CD4-positive, alpha-beta memory T cell (primary cell): ENCODE measurements at regions of chr2 and their contacts with region 1.

Region 1: DNA sequence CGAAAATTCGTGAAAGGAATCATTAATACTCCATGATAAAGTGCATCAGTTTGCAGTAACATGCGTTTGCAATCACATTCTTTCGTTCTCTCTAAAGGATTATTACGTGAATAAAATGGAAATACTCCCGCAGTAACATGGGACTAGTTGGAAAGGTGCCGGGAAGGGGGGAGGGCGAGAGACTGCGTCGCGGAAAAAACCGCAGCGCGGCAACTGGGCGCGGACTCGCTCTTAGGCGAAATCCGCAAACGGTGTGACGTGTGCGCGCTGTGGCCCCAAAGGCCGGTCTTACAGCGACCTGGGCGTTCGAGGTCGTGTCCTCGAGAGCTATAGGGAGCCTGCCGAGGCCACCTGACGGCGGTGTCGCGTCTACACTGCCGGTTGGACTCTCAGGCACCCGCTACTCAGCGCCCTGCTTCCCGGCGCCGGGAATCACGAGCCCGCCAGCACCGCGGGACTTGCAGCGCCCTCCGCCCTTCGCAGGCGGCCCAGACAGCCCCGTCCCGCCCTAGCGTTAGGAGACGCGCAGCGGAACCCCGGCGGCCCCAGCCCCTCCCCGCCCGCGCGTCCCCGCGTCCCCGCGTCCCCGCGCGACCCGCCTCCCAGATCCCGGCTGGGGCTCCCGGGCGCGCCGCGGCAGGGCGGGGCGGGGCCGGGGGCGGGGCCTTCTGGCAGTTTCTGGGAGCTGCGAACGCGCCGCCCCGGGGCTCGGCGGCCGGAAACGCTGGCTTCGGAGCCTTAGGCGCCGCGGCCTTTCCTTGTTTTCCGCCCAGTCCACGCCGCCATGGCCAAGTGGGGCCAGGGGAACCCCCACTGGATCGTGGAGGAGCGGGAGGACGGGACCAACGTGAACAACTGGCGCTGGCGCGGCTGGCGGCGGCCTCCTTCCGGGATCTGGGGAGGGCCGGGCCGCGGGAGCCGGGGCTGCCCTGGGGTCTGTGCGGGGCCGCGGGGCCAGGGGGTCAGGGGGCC is 15.1 kb downstream of the C2orf74 start:
- DNase-seq: peak; percentile 89 to 94 (median 93)
- H3K4me3 ChIP-seq: peak overlapping the region; percentile 74 to 100
- H3K4me3 Mint-ChIP-seq: peak overlapping the region; percentile 91 to 95 (median 93)
- H3K27ac ChIP-seq: peak overlapping the region; percentile 93
- H3K27ac Mint-ChIP-seq: peak overlapping the region; percentile 88 to 96 (median 94)
- H3K4me1 ChIP-seq: peaks cover 47% of the 10 kb centered on the region
- H3K4me1 Mint-ChIP-seq: peaks cover 39 to 56% (median 45%) of the 10 kb centered on the region in 4 donors
- H3K27me3 ChIP-seq: no peaks in the 10 kb centered on the region
- H3K27me3 Mint-ChIP-seq: no peaks in the 10 kb centered on the region

Region 2: GRCh38 chr2:60881047-60881932 is 295.8 kb before region 1 on chr2 and contains the start of gene REL:
- CTCF ChIA-PET with region 1: interaction called, 3 read pairs
- POLR2A ChIA-PET with region 1: interaction called, 28 read pairs
- intact Hi-C with region 1: loop called (anchors 10 kb)
- DNase-seq: peak; percentile 88 to 91 (median 89)
- H3K4me3 ChIP-seq: peak within 1 kb of the TSS; percentile 96 to 100
- H3K4me3 Mint-ChIP-seq: peak within 1 kb of the TSS; percentile 92 to 100 (median 96)
- H3K27ac ChIP-seq: peak within 1 kb of the TSS; percentile 100
- H3K27ac Mint-ChIP-seq: peak within 1 kb of the TSS; percentile 91 to 100 (median 99)
- H3K4me1 ChIP-seq: peaks cover 33% of the 10 kb centered on the region
- H3K4me1 Mint-ChIP-seq: peaks cover 14 to 41% (median 31%) of the 10 kb centered on the region in 4 donors
- H3K27me3 ChIP-seq: no peaks in the 10 kb centered on the region
- H3K27me3 Mint-ChIP-seq: no peaks in the 10 kb centered on the region
- total RNA-seq, gene REL: 26.5 to 28.0 TPM

Region 3: DNA sequence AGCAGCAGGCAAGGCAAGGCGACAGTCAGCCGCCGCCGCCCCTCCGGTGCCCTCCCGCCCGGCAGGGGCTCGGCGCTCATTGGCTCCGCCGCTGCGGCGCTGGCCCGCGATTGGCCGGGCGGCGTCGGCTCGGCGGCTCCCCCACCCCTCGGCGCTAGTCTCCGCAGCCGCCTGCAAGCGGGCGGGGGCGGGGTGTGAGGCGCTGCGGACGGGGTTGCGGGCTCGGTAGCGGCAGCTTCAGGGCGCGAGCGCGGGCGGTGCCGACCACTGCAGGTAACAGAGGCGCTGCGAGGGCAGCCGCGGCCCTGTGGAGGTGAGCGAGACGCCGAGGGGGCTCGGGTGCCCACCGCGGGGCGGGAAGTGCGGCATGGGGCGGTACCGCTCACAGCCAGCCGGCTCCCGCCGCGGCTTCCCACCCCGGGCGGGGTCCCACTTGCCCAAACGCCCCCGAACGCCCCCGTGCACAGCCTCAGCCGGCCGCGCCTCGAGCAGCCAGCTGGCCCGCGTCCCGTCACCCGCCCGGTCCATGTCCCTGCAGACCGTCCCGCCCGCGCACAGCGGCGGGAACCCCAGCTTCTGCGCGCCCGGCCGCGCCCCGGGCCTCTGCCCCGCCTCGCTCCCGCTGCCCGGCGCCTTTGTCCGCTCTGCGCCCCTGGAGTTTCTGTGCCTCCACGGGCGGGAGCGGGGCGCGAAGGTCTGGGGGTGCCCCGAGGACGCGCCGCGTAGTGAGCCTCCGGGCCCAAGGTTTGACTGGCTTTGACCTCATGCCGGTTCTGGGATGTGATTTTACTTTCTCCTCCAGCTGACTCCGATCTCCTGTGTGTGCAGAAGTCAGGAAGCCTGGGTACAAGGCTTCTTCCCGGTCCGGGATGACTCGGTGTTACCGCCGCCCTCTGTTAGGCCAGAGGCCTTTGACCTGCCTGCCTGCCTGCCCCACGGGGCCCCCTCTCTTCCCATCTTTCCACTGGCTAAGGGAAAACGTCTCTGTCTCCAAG is 111.0 kb before region 1 on chr2 and contains the start of gene SANBR:
- CTCF ChIA-PET with region 1: interaction called, 4 read pairs
- POLR2A ChIA-PET with region 1: interaction called, 33 read pairs
- intact Hi-C with region 1: loop called (anchors 1 kb)
- DNase-seq: peak; percentile 83 to 88 (median 86)
- H3K4me3 ChIP-seq: peak within 1 kb of the TSS; percentile 50 to 59
- H3K4me3 Mint-ChIP-seq: peak within 1 kb of the TSS; percentile 93 to 98 (median 97)
- H3K27ac ChIP-seq: peak within 1 kb of the TSS; percentile 51
- H3K27ac Mint-ChIP-seq: peak within 1 kb of the TSS; percentile 89 to 95 (median 93)
- H3K4me1 ChIP-seq: peaks cover 8% of the 10 kb centered on the region
- H3K4me1 Mint-ChIP-seq: peaks cover 7 to 16% (median 8%) of the 10 kb centered on the region in 4 donors
- H3K27me3 ChIP-seq: no peaks in the 10 kb centered on the region
- H3K27me3 Mint-ChIP-seq: no peaks in the 10 kb centered on the region
- total RNA-seq, gene SANBR: 5.4 to 6.0 TPM

Region 4: GRCh38 chr2:61162721-61163120 is 14.3 kb before region 1 on chr2:
- CTCF ChIA-PET with region 1: interaction called, 3 read pairs
- POLR2A ChIA-PET with region 1: interaction called, 17 read pairs
- intact Hi-C with region 1: no loop called
- DNase-seq: no peak
- H3K4me3 ChIP-seq: no peak overlapping the region
- H3K4me3 Mint-ChIP-seq: no peak overlapping the region
- H3K27ac ChIP-seq: no peak overlapping the region
- H3K27ac Mint-ChIP-seq: peak overlapping the region in 3 of 7 donors; percentile 3 to 67 (median 29)
- H3K4me1 ChIP-seq: no peaks in the 10 kb centered on the region
- H3K4me1 Mint-ChIP-seq: peaks cover 0 to 6% (median 3%) of the 10 kb centered on the region in 4 donors
- H3K27me3 ChIP-seq: no peaks in the 10 kb centered on the region
- H3K27me3 Mint-ChIP-seq: no peaks in the 10 kb centered on the region

Region 5: DNA sequence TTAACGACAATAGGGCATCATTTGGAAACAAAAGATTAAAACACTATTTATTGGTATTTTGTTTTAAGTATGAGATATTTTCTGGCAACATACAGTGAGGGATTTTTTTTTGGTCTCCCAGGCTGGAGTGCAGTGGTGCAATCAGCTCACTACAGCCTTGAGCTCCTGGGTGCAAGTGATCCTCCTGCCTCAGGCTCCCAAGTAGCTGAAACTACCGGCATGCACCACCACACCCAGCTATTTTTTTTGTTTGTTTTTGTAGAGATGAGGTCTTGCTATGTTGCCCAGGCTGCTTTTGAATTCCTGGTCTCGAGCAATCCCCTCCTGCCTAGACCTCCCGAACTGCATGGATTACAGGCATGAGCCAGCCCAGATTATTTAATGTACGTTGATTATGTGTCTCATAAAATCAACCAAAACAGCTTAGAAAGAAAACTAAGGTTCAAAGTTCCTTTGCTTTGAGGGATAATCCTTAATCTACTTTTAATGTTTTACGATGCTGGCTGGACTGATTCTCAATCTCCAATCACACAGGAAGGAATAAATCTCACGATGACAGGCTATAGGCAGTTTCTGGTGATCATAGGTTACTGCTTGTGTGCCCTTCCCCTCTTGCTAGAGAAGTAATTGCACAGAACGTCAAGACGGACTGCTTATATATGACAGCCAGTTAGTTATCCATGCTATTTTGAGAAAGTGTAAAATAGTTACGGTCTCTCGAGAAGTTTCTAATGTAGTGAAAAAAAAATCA is 27.9 kb after region 1 on chr2:
- CTCF ChIA-PET with region 1: no interaction called
- POLR2A ChIA-PET with region 1: interaction called, 16 read pairs
- intact Hi-C with region 1: no loop called
- DNase-seq: no peak
- H3K4me3 ChIP-seq: no peak overlapping the region
- H3K4me3 Mint-ChIP-seq: no peak overlapping the region
- H3K27ac ChIP-seq: no peak overlapping the region
- H3K27ac Mint-ChIP-seq: no peak overlapping the region
- H3K4me1 ChIP-seq: no peaks in the 10 kb centered on the region
- H3K4me1 Mint-ChIP-seq: no peaks in the 10 kb centered on the region
- H3K27me3 ChIP-seq: no peaks in the 10 kb centered on the region
- H3K27me3 Mint-ChIP-seq: no peaks in the 10 kb centered on the region

Region 6: DNA sequence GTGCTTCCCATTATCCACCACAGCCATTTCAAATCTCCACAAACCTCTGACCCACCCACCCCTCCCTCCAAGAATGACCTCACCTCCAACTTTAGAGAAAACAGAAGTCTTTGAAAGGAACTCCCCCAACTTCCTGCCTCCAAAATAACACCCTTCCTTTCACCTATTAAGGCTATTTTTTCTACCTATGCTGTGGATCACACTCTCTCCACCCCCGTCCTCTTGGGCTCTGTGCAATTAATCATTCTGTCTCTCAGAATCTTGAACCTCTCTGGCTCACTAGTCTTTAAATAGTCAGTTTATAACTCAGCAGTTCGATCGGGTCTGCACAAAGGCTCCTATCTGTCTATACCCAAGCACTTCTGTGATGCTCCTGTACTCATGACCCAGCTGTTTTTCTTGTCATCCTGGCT is 398.4 kb after region 1 on chr2:
- CTCF ChIA-PET with region 1: no interaction called
- POLR2A ChIA-PET with region 1: no interaction called
- intact Hi-C with region 1: no loop called
- DNase-seq: peak in 1 of 5 donors; percentile 1
- H3K4me3 ChIP-seq: no peak overlapping the region
- H3K4me3 Mint-ChIP-seq: peak overlapping the region in 1 of 8 donors; percentile 45
- H3K27ac ChIP-seq: no peak overlapping the region
- H3K27ac Mint-ChIP-seq: peak overlapping the region in 4 of 7 donors; percentile 22 to 87 (median 74)
- H3K4me1 ChIP-seq: peaks cover 8% of the 10 kb centered on the region
- H3K4me1 Mint-ChIP-seq: peaks cover 6 to 9% (median 7%) of the 10 kb centered on the region in 4 donors
- H3K27me3 ChIP-seq: no peaks in the 10 kb centered on the region
- H3K27me3 Mint-ChIP-seq: no peaks in the 10 kb centered on the region

Region 7: GRCh38 chr2:61764035-61764800 is 587.2 kb after region 1 on chr2:
- CTCF ChIA-PET with region 1: no interaction called
- POLR2A ChIA-PET with region 1: interaction called, 5 read pairs
- intact Hi-C with region 1: loop called (anchors 1 kb)
- DNase-seq: peak; percentile 95 to 98 (median 96)
- H3K4me3 ChIP-seq: peak overlapping the region; percentile 78 to 83
- H3K4me3 Mint-ChIP-seq: peak overlapping the region; percentile 93 to 98 (median 96)
- H3K27ac ChIP-seq: peak overlapping the region; percentile 94
- H3K27ac Mint-ChIP-seq: peak overlapping the region; percentile 95 to 99 (median 99)
- H3K4me1 ChIP-seq: peaks cover 15% of the 10 kb centered on the region
- H3K4me1 Mint-ChIP-seq: peaks cover 8 to 22% (median 15%) of the 10 kb centered on the region in 4 donors
- H3K27me3 ChIP-seq: no peaks in the 10 kb centered on the region
- H3K27me3 Mint-ChIP-seq: peaks cover 0 to 2% of the 10 kb centered on the region in 2 donors